ENCODE measurements at regions of chr6 and their contacts with region 1.

Region 1: DNA sequence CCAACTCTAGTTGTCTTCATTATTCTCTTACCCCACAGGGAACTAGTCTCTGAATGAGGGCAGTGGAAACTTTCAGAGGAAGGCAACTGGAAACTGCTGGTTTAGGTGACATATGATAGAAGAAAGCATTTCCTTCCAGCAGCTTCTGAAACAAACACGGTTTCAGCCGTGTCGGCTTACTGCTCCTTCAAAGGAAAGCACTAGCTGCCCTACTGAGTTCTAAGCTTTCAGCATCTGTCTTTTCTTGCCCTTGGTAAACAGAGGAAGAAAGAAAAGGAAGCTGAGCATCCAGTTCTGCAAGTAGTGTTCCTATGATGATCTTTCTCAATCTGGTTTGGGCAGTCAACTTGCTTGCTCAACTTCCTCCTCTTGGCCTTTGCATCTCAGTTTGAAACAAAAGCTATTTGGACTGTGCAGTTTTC is 117.5 kb upstream of the CEP85L start:
- DNase-seq: no peak
- H3K4me3 ChIP-seq: no peak overlapping the region
- H3K27me3 ChIP-seq: peaks cover 1% of the 10 kb centered on the region; the same call in 1 of the 2 replicates
- CTCF ChIP-seq: no peak

Region 2: DNA sequence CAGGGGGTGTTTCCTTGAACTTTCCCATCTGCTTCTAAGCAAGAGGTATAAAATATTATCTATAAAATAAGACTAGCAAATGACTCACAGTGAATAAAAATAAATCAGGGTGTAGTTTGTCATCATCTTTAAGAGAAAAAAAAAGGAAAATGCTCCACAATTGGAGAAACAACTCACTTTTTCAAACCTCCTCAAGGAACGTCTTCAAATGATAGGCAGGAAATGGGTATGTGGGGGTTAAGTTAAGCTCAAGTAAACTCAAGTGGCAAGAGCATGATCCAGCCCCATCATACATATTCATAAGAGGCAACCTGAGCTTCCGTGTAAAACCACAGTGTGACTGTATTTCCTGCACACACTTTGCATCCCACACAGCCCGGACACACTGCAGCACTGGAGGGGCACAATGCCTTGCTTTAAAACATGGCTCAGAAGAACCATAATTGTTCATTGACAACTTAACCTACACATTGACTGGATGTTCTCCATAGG is 59.0 kb before region 1 on chr6:
- CTCF ChIA-PET with region 1: no interaction called
- POLR2A ChIA-PET with region 1: interaction called, 15 read pairs
- DNase-seq: peak; percentile 44
- H3K4me3 ChIP-seq: peak overlapping the region; percentile 47
- H3K27me3 ChIP-seq: no peaks in the 10 kb centered on the region
- CTCF ChIP-seq: no peak